Calu3 (cell line): ENCODE measurements at regions of chr12 and their contacts with region 1.

Region 1: DNA sequence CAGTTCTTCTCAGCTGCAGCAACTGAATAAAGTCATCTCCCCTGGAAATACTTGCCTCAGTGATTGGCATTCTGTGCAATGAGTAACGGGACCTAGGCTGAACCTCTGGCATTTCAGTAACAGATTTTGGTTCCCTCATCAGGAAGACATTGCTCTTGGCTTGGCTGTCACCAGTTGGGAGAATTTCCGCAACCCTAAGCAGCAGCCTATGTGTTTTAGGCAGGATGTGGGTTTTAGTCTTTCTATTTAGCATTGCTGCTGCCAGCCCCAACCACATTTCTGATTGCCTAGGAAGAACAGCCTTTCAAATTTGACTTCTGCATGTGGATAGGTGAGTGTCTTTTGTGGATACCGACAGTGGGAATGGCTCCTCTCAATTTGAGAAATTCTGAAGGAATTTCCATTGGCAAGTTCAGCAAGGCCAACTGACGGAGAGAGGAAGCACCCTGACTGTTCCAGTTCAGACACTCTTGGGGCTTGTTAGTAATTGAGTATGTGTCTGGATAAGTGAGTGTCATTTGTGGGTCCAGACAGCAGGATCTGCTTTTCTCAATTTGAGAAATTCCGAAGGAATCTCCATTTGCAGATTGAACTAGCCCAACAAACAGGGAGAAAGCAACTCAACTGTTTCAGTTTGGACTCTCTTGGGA is 19.0 kb upstream of the CLEC2A start:
- DNase-seq: no peak
- H3K4me3 Mint-ChIP-seq: no peak overlapping the region
- H3K27ac Mint-ChIP-seq: no peak overlapping the region
- H3K4me1 Mint-ChIP-seq: no peaks in the 10 kb centered on the region
- H3K27me3 Mint-ChIP-seq: peaks cover 37% of the 10 kb centered on the region
- CTCF ChIP-seq: no peak

Region 2: GRCh38 chr12:9773216-9773877 is 177.8 kb before region 1 on chr12:
- CTCF ChIA-PET with region 1: interaction called, 12 read pairs
- intact Hi-C with region 1: no loop called
- DNase-seq: no peak
- H3K4me3 Mint-ChIP-seq: no peak overlapping the region
- H3K27ac Mint-ChIP-seq: no peak overlapping the region
- H3K4me1 Mint-ChIP-seq: peaks cover 38% of the 10 kb centered on the region
- H3K27me3 Mint-ChIP-seq: no peaks in the 10 kb centered on the region
- CTCF ChIP-seq: no peak

Region 3: GRCh38 chr12:10392394-10392930 is 441.3 kb after region 1 on chr12:
- CTCF ChIA-PET with region 1: no interaction called
- intact Hi-C with region 1: no loop called
- DNase-seq: peak; percentile 38
- H3K4me3 Mint-ChIP-seq: no peak overlapping the region
- H3K27ac Mint-ChIP-seq: no peak overlapping the region
- H3K4me1 Mint-ChIP-seq: peaks cover 32% of the 10 kb centered on the region
- H3K27me3 Mint-ChIP-seq: no peaks in the 10 kb centered on the region
- CTCF ChIP-seq: no peak